GM13976 (cell line): ENCODE measurements at regions of chr11 and their contacts with region 1.

Region 1: GRCh38 chr11:87421422-87421821 is 383.7 kb downstream of the TMEM135 start:
- DNase-seq: peak; percentile 54
- CTCF ChIP-seq: peak; percentile 60

Region 2: GRCh38 chr11:86938900-86939880 is 482.2 kb before region 1 on chr11:
- in situ Hi-C with region 1: loop called (anchors 10 kb)
- DNase-seq: peak; percentile 44
- CTCF ChIP-seq: peak; percentile 65

Region 3: DNA sequence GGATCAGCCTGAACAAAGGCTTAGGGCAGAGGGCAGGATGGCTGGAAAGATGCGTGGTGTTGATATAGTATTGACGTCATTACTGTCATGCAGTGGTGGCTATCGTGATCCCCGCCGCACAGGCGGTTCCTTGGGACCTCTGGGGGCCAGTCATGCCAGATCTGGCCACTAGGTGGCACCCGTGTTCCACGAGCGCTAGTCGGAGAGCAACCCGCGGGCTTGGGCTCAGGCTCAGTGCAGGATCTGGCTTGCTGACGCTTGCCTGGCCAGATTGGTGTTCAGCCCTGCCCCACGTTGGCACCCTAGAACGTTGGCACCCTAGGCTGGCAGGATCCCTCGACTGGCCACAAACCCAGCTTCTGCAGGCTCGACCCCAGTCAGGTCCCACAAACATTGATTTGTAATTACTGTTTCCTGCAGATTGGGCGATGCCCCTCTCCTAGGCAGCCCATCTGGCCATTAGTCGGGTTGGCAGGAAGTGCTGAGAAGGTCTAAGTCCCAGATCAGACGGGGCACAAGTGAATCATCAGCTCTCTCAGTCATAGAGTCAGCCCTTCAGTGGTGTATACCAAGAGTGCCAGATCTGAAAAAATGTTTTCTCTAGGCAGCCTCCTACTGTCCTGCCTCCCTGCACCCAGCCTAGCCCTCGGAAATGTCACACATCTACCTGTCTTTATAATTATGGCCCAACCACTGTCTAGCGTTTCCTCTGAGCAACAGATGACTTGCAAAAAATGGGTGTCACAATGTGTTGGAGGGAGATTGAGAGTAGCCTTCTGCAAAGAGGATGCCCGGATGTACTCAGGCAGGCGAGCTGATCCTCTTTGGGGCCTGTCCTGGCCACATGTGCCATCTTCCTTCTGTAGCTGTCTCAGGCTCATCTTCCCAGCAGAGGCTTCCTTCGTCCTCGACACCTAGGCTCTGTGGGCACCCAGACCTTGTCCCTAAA is 68.4 kb before region 1 on chr11:
- in situ Hi-C with region 1: loop called (anchors 10 kb)
- DNase-seq: peak; percentile 82
- CTCF ChIP-seq: peak; percentile 96